BJ (cell line): ENCODE measurements at regions of chr4 and their contacts with region 1.

Region 1: GRCh38 chr4:158253350-158253980 is 43.2 kb downstream of the TMEM144 start:
- DNase-seq: peak; percentile 6
- H3K4me3 ChIP-seq: no peak overlapping the region
- H3K27me3 ChIP-seq: no peaks in the 10 kb centered on the region
- CTCF ChIP-seq: peak; percentile 69

Region 2: GRCh38 chr4:157502656-157503055 is 750.8 kb before region 1 on chr4:
- CTCF ChIA-PET with region 1: no interaction called
- POLR2A ChIA-PET with region 1: no interaction called
- DNase-seq: no peak
- H3K4me3 ChIP-seq: no peak overlapping the region
- H3K27me3 ChIP-seq: no peaks in the 10 kb centered on the region
- CTCF ChIP-seq: no peak

Region 3: DNA sequence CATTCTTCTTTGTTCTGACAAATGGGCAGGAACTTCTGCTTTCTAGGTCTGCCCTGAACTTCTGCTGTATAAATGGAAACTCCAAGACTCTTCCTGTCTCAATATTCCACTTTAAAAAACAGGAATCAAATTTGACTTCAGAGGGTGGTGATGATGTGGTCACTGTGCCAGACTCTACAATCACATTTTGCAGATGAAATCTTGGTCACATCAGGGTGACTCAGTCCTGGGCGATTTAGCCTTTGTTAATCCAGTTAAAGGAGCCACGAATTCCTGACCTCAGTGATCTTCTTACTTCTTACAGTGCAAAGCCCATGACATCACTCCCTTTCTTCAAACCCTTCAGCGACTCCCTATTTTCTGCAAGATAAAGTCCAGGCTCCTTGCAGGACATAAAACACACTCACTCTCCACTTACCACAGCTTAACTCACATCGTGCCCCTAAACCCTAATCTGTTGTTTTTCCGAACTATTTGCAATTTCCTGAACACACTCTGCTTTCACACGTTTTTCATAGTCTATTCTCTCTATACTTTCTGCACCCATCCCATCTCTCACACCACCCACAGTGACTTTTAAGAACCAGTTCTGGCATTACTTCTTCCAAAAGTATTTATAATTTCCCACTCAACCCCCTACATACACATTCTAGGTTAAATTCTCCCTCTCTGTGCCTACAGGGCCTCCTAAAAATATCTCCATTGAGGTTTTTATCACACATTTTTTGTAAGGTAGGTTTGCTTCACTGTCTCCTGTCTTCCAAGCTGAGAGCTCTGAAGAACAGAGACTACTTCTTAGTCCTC is 91.7 kb before region 1 on chr4:
- CTCF ChIA-PET with region 1: no interaction called
- POLR2A ChIA-PET with region 1: no interaction called
- DNase-seq: peak; percentile 40
- H3K4me3 ChIP-seq: no peak overlapping the region
- H3K27me3 ChIP-seq: no peaks in the 10 kb centered on the region
- CTCF ChIP-seq: no peak

Region 4: GRCh38 chr4:158234671-158235070 is 18.8 kb before region 1 on chr4:
- CTCF ChIA-PET with region 1: interaction called, 10 read pairs
- POLR2A ChIA-PET with region 1: no interaction called
- DNase-seq: no peak
- H3K4me3 ChIP-seq: no peak overlapping the region
- H3K27me3 ChIP-seq: no peaks in the 10 kb centered on the region
- CTCF ChIP-seq: no peak

Region 5: DNA sequence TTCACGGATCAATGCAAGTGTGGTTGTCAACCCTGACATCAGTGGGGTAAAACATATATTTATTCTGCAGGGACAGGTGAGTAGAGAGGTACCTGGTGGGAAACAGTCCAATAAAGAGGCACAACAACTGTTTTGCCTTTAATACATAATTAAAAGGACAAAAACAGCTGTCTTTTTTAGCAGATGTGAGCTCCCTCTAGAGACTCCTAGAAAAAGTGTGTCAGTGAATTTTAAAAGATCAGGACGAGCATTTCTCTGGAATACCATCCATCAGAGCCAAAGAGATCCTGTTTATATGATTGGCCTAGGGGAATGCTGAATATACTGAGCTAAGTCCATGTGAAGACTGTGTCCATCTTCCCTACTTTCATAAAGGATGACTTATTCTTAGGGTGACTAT is 15.1 kb after region 1 on chr4:
- CTCF ChIA-PET with region 1: no interaction called
- POLR2A ChIA-PET with region 1: no interaction called
- DNase-seq: no peak
- H3K4me3 ChIP-seq: no peak overlapping the region
- H3K27me3 ChIP-seq: no peaks in the 10 kb centered on the region
- CTCF ChIP-seq: no peak

Region 6: DNA sequence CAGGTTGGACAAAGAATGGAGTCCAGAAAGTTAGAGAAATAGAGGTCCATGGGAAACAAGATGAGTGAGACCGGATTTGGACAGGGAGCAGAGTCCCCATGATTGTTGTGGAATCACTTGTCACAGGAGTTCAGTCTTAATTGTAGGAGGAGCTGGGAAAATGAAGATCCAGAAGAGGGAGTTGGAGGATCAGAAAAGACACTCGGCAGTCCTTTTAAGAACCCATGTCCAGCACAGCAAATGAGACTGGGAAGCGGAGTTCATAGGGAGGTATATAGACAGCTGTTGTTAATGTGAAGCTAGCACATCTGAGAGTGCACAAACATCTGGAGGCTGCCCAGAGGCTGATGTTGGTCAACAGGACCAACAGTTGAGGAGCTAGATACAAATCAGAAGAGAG is 156.8 kb after region 1 on chr4:
- CTCF ChIA-PET with region 1: interaction called, 13 read pairs
- POLR2A ChIA-PET with region 1: no interaction called
- DNase-seq: no peak
- H3K4me3 ChIP-seq: no peak overlapping the region
- H3K27me3 ChIP-seq: no peaks in the 10 kb centered on the region
- CTCF ChIP-seq: peak; percentile 34

Region 7: GRCh38 chr4:158624889-158625478 is 371.5 kb after region 1 on chr4:
- CTCF ChIA-PET with region 1: interaction called, 29 read pairs
- POLR2A ChIA-PET with region 1: no interaction called
- DNase-seq: no peak
- H3K4me3 ChIP-seq: no peak overlapping the region
- H3K27me3 ChIP-seq: no peaks in the 10 kb centered on the region
- CTCF ChIP-seq: peak; percentile 77